ENCODE measurements at regions of chr6 and their contacts with region 1.

Region 1: DNA sequence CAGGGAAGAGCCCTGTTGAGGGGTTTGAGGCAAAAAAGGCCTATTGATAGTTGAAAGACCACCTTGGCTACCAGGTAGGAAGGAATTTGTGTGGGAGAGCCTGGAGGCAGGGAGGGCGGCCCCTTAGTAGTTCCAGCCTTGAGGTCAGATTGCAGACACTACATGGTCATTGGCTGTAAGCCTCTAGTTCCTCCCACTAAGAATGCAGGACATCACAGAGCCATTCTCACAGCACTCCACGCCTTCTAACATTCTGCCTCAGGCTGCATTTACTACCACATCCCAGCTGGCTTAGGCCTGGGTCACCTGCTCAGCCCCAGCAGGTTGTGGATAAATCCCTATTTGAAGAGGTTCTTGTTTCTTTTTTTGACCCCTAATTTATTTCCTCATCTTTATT is 91.0 kb upstream of the SNX9 start:
- DNase-seq: no peak
- ATAC-seq: no peak
- H3K4me3 ChIP-seq: no peak overlapping the region
- H3K27ac ChIP-seq: no peak overlapping the region
- H3K4me1 ChIP-seq: no peaks in the 10 kb centered on the region
- H3K27me3 ChIP-seq: no peaks in the 10 kb centered on the region
- CTCF ChIP-seq: no peak

Region 2: GRCh38 chr6:157708928-157709327 is 23.1 kb before region 1 on chr6:
- CTCF ChIA-PET with region 1: no interaction called
- POLR2A ChIA-PET with region 1: no interaction called
- in situ Hi-C with region 1: no loop called
- intact Hi-C with region 1: loop called (anchors 2 kb)
- DNase-seq: no peak
- ATAC-seq: no peak
- H3K4me3 ChIP-seq: no peak overlapping the region
- H3K27ac ChIP-seq: no peak overlapping the region
- H3K4me1 ChIP-seq: no peaks in the 10 kb centered on the region
- H3K27me3 ChIP-seq: no peaks in the 10 kb centered on the region
- CTCF ChIP-seq: no peak

Measured in Panc1 (cell line).